ENCODE measurements at regions of chr1 and their contacts with region 1.

Region 1: DNA sequence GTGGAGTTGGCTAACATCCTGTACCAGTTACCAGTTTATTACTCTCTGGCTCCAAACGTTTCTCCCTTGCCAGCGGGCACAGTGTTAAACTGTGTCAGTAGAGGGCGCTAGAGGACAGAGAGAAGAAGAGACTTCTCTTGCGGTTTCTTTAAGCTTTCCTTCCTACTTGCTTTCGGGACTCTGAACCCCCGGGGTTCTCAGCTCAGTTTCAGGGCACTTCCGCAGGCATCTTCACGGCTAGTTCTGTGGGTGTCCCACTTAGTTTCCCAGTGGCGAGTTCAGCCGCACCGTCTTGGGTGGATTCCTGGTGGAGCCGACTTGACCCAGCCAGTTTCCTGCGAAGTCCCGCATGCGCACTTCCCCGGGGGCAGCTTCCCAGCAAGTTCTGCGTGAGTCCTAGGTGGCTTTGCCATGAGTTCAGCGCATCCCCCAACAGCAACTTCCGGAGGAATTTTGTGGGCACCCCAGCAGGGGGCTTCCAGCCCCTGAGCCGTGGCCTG is 37.9 kb upstream of the BTG2 start:
- DNase-seq: no peak
- ATAC-seq: peak; percentile 70
- H3K4me3 ChIP-seq: peak overlapping the region; percentile 61; the same call in 1 of the 2 replicates
- H3K27ac ChIP-seq: peak overlapping the region; percentile 47
- H3K4me1 ChIP-seq: peaks cover 7% of the 10 kb centered on the region
- H3K27me3 ChIP-seq: no peaks in the 10 kb centered on the region; a peak in 1 of 4 replicates
- CTCF ChIP-seq: peak; percentile 89 to 97 (median 91)
- EP300 ChIP-seq: no peak
- POLR2A ChIP-seq: no peak
- RAD21 ChIP-seq: peak; percentile 95

Region 2: DNA sequence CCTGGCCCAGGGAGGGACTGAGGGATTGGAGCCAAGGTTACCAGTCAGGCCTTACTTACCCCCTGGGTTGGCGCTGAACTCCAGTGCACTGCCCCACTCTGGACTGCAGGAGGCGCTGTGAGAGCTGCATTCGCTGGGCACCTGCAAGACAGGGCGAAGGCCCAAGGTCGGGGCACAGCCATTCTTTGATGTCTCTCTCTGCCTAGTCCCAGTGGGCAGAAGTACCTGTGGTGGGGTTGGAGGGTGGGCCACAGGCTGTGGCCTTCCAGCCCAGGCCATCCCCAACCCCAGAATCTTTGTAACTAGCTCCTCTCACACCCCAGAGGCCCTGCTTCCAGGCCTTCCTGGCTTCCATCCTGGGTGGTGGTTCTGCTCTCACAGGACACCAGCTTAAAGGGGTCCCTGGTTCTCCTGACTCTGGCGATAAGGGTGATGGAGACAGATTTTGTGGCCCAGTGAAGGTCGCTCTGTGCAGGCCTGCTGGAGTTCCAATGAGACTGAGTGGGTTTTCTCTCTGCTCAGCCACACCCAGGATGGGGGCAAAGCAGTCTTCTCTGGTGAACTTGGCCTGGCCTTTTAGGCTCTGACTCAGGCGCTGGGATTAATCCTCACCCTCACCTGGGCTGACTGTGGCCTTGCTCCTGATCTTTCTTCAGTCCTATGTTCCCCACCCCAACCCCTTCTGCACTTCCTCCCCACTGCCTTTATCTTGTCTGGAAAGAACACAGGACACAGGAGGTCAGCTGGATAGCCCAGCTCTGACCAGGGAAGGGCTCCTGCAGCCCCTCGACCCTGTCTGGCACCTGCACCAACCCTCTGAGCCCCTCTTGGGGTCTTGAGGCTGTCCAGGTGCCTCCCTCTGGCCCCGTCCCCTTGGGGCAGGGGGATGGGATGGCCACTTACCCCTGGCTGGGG is 182.6 kb before region 1 on chr1:
- CTCF ChIA-PET with region 1: interaction called, 12 read pairs
- POLR2A ChIA-PET with region 1: no interaction called
- RAD21 ChIA-PET with region 1: interaction called, 4 read pairs
- SMC1A ChIA-PET with region 1: interaction called, 5 read pairs
- in situ Hi-C with region 1: no loop called
- intact Hi-C with region 1: no loop called
- DNase-seq: no peak
- ATAC-seq: peak; percentile 75
- H3K4me3 ChIP-seq: no peak overlapping the region
- H3K27ac ChIP-seq: no peak overlapping the region
- H3K4me1 ChIP-seq: no peaks in the 10 kb centered on the region
- H3K27me3 ChIP-seq: peaks cover 0 to 3% of the 10 kb centered on the region in 2 experiments; a peak in 2 of 4 replicates
- CTCF ChIP-seq: peak; percentile 39 to 73 (median 58)
- EP300 ChIP-seq: no peak
- POLR2A ChIP-seq: no peak
- RAD21 ChIP-seq: peak; percentile 51

Region 3: GRCh38 chr1:203172128-203173010 is 95.0 kb before region 1 on chr1:
- CTCF ChIA-PET with region 1: interaction called, 41 read pairs
- POLR2A ChIA-PET with region 1: no interaction called
- RAD21 ChIA-PET with region 1: interaction called, 13 read pairs
- SMC1A ChIA-PET with region 1: interaction called, 7 read pairs
- in situ Hi-C with region 1: no loop called
- intact Hi-C with region 1: loop called (anchors 5 kb)
- DNase-seq: no peak
- ATAC-seq: peak; percentile 65
- H3K4me3 ChIP-seq: no peak overlapping the region
- H3K27ac ChIP-seq: no peak overlapping the region
- H3K4me1 ChIP-seq: peaks cover 4% of the 10 kb centered on the region; the same call in 1 of the 2 replicates
- H3K27me3 ChIP-seq: no peaks in the 10 kb centered on the region; a peak in 2 of 4 replicates
- CTCF ChIP-seq: peak; percentile 69 to 96 (median 90)
- EP300 ChIP-seq: no peak
- POLR2A ChIP-seq: no peak
- RAD21 ChIP-seq: peak; percentile 54

Region 4: GRCh38 chr1:203282720-203283542 is 15.5 kb after region 1 on chr1:
- CTCF ChIA-PET with region 1: interaction called, 186 read pairs
- POLR2A ChIA-PET with region 1: interaction called, 168 read pairs
- RAD21 ChIA-PET with region 1: interaction called, 251 read pairs
- SMC1A ChIA-PET with region 1: interaction called, 37 read pairs
- in situ Hi-C with region 1: no loop called
- intact Hi-C with region 1: no loop called
- DNase-seq: no peak
- ATAC-seq: peak; percentile 28
- H3K4me3 ChIP-seq: peak overlapping the region; percentile 13; the same call in 1 of the 2 replicates
- H3K27ac ChIP-seq: peak overlapping the region; percentile 67
- H3K4me1 ChIP-seq: peaks cover 52% of the 10 kb centered on the region
- H3K27me3 ChIP-seq: no peaks in the 10 kb centered on the region
- CTCF ChIP-seq: no peak
- EP300 ChIP-seq: no peak
- POLR2A ChIP-seq: no peak
- RAD21 ChIP-seq: no peak

Region 5: GRCh38 chr1:203440771-203441170 is 173.4 kb after region 1 on chr1:
- CTCF ChIA-PET with region 1: interaction called, 82 read pairs
- POLR2A ChIA-PET with region 1: no interaction called
- RAD21 ChIA-PET with region 1: interaction called, 9 read pairs
- SMC1A ChIA-PET with region 1: interaction called, 27 read pairs
- in situ Hi-C with region 1: loop called (anchors 5 kb)
- intact Hi-C with region 1: loop called (anchors 5 kb)
- DNase-seq: no peak
- ATAC-seq: peak; percentile 95
- H3K4me3 ChIP-seq: no peak overlapping the region
- H3K27ac ChIP-seq: no peak overlapping the region
- H3K4me1 ChIP-seq: no peaks in the 10 kb centered on the region
- H3K27me3 ChIP-seq: peaks cover 0 to 3% of the 10 kb centered on the region in 2 experiments; a peak in 2 of 4 replicates
- CTCF ChIP-seq: peak; percentile 31 to 77 (median 52); a peak in 4 of 6 replicates
- EP300 ChIP-seq: no peak
- POLR2A ChIP-seq: no peak
- RAD21 ChIP-seq: peak; percentile 82

Region 6: DNA sequence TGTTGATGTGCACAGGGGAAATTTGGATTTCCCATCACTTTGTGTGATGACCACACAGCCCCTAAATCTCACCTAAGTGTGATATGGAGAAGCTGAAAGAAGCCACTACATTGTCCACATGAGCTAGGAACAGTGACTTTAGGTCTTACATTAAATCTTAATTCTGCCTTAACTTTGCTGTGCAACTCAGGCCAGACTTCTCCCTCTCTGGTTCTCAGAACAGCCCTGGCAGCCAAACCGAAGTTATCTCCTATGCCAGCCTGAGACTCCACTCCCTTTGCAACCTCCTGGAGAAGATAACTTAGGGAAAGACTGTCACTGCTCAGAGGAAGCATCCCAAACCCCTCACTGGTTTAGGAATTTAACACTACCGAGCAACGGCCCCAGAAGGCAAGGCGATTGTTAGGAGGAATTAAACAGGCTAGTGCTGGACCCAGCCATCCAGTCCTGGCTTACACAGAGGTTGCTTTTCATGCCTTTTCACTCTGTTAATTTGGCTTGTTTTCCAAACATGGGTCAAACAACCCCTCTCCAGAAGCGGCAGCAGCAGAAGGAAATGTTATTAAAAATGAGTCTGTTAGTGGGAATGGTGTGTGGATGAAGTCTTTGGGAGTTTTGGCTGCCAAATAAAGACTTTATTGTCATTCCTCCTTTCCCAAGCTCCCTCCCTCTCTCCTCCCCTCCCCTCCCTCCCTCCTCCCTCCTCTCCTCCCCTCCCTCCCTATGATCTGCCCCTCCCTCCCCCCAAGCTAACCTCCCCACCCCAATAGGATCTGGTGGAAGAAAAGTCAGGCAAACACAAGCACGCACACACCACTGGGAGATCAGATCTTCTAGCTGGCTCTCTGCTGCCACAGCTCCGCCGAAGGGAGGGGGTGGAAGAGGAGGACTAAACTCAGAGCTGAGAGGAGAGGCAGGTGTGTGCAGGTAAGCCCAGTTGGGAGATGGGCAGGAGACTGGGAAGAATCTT is 207.9 kb after region 1 on chr1 and contains the start of gene PRELP:
- CTCF ChIA-PET with region 1: interaction called, 19 read pairs
- POLR2A ChIA-PET with region 1: no interaction called
- RAD21 ChIA-PET with region 1: interaction called, 11 read pairs
- SMC1A ChIA-PET with region 1: interaction called, 4 read pairs
- in situ Hi-C with region 1: no loop called
- intact Hi-C with region 1: no loop called
- DNase-seq: no peak
- ATAC-seq: no peak
- H3K4me3 ChIP-seq: no peak within 1 kb of the TSS
- H3K27ac ChIP-seq: no peak within 1 kb of the TSS
- H3K4me1 ChIP-seq: peaks cover 9% of the 10 kb centered on the region; the same call in 1 of the 2 replicates
- H3K27me3 ChIP-seq: peaks cover 2 to 6% of the 10 kb centered on the region in 2 experiments; a peak in 2 of 4 replicates
- CTCF ChIP-seq: no peak
- EP300 ChIP-seq: no peak
- POLR2A ChIP-seq: no peak
- RAD21 ChIP-seq: no peak
- polyA plus RNA-seq, gene PRELP: not detected

Region 7: GRCh38 chr1:203504397-203505250 is 237.2 kb after region 1 on chr1:
- CTCF ChIA-PET with region 1: interaction called, 10 read pairs
- POLR2A ChIA-PET with region 1: no interaction called
- RAD21 ChIA-PET with region 1: interaction called, 7 read pairs
- SMC1A ChIA-PET with region 1: interaction called, 9 read pairs
- in situ Hi-C with region 1: no loop called
- intact Hi-C with region 1: no loop called
- DNase-seq: peak; percentile 20
- ATAC-seq: peak; percentile 93
- H3K4me3 ChIP-seq: no peak overlapping the region
- H3K27ac ChIP-seq: no peak overlapping the region
- H3K4me1 ChIP-seq: no peaks in the 10 kb centered on the region
- H3K27me3 ChIP-seq: no peaks in the 10 kb centered on the region; a peak in 1 of 4 replicates
- CTCF ChIP-seq: peak; percentile 72 to 73 (median 72)
- EP300 ChIP-seq: no peak
- POLR2A ChIP-seq: no peak
- RAD21 ChIP-seq: peak; percentile 84

Measured in GM12878 (cell line).